ENCODE measurements at regions of chr12 and their contacts with region 1.

Region 1: DNA sequence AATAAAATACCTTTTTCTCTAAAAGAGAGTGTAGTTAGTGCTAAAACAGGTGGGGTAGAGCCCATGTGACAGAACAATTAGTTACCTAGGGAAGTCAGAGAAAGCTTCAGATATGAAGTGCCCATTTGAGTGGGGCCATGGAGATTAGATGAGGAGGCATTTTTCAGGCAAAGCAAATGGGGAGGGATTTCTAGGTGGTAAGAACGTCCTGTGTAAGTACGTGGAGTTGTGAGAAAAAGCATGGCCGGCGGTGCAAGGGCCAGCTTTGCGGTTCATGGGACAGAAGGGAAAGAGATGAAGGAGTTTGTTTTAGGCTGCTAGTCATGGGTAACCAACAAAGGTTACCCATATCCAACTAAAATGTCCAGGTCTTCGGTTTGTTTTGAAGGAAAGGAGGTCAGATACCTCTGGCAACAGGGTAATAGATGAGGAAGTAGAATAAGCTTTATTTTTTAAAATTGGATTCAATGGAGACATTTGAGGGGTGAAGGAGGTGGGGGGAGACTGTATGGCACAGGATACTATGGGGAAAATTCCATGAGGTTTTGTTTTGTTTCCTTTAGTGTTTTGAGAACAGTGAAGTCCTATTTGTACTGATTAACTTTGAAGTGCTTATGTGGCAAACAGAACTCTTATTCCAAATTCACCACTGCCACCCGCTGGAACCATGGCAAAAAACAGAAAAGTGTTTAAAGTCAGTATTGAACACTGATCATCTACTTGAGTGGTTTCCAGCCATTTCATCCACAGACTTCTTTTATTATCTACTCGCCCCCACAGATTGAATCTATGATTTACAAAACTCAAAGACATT is 10.0 kb upstream of the SNRPF start:
- DNase-seq: no peak
- H3K4me3 ChIP-seq: no peak overlapping the region
- CTCF ChIP-seq: peak; percentile 13

Region 2: GRCh38 chr12:95820102-95820703 is 28.6 kb before region 1 on chr12:
- CTCF ChIA-PET with region 1: interaction called, 30 read pairs
- POLR2A ChIA-PET with region 1: no interaction called
- DNase-seq: no peak
- H3K4me3 ChIP-seq: no peak overlapping the region
- CTCF ChIP-seq: peak; percentile 51

Region 3: GRCh38 chr12:95829395-95829794 is 19.4 kb before region 1 on chr12:
- CTCF ChIA-PET with region 1: interaction called, 30 read pairs
- POLR2A ChIA-PET with region 1: no interaction called
- DNase-seq: no peak
- H3K4me3 ChIP-seq: no peak overlapping the region
- CTCF ChIP-seq: no peak

Region 4: GRCh38 chr12:96035278-96036236 is 186.8 kb after region 1 on chr12 and contains the start of gene LTA4H:
- CTCF ChIA-PET with region 1: no interaction called
- POLR2A ChIA-PET with region 1: no interaction called
- DNase-seq: peak; percentile 88
- H3K4me3 ChIP-seq: peak within 1 kb of the TSS; percentile 100
- CTCF ChIP-seq: no peak